ENCODE measurements at regions of chr16 and their contacts with region 1.

Region 1: GRCh38 chr16:30761928-30762810 is at the starts of genes CFAP119 and RNF40:
- DNase-seq: peak; percentile 96
- H3K4me3 ChIP-seq: peak within 1 kb of the TSS; percentile 79 to 91 (median 89)
- H3K27ac ChIP-seq: peak within 1 kb of the TSS; percentile 93 to 96 (median 94)
- H3K4me1 ChIP-seq: peaks cover 20 to 29% (median 25%) of the 10 kb centered on the region in 4 donors
- H3K27me3 ChIP-seq: no peaks in the 10 kb centered on the region
- CTCF ChIP-seq: no peak
- EP300 ChIP-seq: no peak
- POLR2A ChIP-seq: peak; percentile 86
- total RNA-seq, gene CFAP119: 3.3 to 15.5 (median 6.0) TPM
- total RNA-seq, gene RNF40: 55.3 to 105 (median 77.8) TPM

Region 2: DNA sequence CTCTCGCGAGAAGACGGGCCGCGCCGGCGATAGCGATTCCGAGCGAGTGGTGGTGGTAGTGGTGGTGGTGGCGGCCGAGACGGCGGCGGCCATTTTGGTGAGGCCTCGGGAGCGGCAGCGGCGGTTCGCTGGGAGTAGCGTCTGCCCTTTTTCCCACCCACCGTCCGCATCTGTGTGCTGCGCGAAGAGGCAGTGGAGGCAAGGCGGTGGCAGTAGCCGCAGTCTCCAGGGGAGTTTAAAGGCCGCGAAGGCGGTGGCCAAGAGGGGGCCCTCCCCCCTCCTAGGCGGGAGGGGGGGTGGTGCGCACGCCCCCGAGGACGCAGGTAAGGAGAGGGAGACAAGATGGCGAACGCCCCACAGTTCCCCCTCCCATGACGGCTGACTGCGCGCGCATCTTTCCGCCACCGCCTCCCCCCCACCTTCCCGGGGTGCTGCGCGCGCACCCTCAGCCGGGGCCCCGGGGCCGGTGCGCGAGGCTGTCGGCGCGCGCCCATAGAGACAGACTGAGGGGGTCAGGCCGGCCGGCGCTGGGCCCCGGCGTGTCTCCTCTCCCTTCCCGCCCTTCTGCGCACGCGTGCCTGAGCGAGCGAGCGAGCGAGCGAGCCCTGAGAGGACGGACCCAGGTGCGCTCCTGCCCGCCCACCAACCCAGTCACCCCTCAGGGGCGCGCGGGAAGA is 63.9 kb before region 1 on chr16:
- in situ Hi-C with region 1: no loop called
- intact Hi-C with region 1: loop called (anchors 10 kb)
- DNase-seq: peak; percentile 99
- H3K4me3 ChIP-seq: peak overlapping the region; percentile 79 to 96 (median 86)
- H3K27ac ChIP-seq: peak overlapping the region; percentile 98 to 100 (median 99)
- H3K4me1 ChIP-seq: peaks cover 9 to 24% (median 14%) of the 10 kb centered on the region in 4 donors
- H3K27me3 ChIP-seq: no peaks in the 10 kb centered on the region
- CTCF ChIP-seq: no peak
- EP300 ChIP-seq: no peak
- POLR2A ChIP-seq: peak; percentile 94

Region 3: DNA sequence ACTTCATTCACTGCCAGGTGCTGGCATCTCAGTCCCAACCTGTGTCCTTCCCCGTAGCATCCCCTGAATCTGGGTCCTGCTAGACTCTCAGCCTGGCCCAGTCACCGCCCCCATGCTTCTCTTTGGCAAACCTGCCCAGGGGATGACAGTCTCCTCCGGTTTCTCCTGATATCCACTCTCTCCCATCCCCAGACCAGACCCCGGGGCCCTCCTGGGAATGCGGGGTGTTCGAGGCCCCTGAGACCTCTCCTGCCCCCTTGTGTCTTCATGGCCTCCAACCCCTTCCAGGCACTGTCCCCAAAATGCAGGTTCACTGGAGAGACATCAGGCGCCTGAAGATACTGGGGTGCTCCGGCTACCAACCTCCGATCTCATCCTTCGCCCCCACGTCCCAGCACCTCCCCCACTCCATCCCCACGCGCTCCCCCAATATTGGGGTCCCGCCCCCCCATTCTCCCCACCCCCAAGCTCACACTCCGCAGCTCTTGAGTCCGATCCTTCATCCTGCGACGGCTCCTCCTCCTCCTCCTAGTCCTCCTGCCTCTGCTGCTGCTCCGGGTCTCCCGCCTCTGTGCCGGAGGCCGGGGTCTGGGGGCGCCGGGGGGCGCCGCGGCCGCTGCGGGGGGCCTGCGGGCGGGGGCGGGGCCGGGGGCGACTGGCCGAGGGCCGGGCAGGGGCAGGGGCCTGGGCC is 247.9 kb after region 1 on chr16:
- in situ Hi-C with region 1: no loop called
- intact Hi-C with region 1: no loop called
- DNase-seq: no peak
- H3K4me3 ChIP-seq: no peak overlapping the region
- H3K27ac ChIP-seq: no peak overlapping the region
- H3K4me1 ChIP-seq: peaks cover 0 to 4% (median 0%) of the 10 kb centered on the region in 4 donors
- H3K27me3 ChIP-seq: peaks cover 78% of the 10 kb centered on the region
- CTCF ChIP-seq: no peak
- EP300 ChIP-seq: no peak
- POLR2A ChIP-seq: no peak

Region 4: DNA sequence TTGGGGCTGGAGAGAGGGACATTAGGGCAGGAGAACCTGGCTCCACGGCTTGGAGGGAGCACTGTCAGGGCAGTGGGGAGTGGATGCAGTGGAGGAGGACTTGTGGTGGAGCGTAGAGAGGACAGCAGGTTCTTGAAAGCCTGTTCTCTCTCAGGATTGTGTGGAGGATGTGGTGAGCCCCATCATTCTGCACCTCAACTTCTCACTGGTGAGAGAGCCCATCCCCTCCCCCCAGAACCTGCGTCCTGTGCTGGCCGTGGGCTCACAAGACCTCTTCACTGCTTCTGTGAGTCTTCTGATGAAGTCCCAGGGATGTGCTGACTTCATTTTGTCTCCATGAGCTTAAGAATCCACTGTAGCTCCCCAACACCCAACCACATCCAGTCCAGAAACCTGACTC is 652.5 kb after region 1 on chr16:
- in situ Hi-C with region 1: no loop called
- intact Hi-C with region 1: loop called (anchors 5 kb)
- DNase-seq: peak; percentile 23
- H3K4me3 ChIP-seq: no peak overlapping the region
- H3K27ac ChIP-seq: no peak overlapping the region
- H3K4me1 ChIP-seq: no peaks in the 10 kb centered on the region
- H3K27me3 ChIP-seq: peaks cover 4% of the 10 kb centered on the region
- CTCF ChIP-seq: no peak
- EP300 ChIP-seq: no peak
- POLR2A ChIP-seq: no peak

Region 5: DNA sequence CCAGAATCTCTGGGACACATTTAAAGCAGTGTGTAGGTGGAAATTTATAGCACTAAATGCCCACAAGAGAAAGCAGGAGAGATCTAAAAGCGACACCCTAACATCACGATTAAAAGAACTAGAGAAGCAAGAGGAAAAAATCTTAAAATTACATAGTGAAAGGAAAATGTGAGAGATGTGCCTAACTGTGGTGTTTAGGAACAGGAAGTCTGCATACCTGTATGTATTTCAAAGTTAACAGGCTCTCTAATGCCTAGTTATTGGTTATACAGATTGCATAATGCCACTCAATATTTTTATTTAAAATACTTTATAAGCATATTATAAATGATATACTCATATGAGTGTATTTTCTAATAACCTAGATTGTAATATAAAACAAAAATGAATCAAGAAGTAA is 1137.3 kb after region 1 on chr16:
- in situ Hi-C with region 1: no loop called
- intact Hi-C with region 1: no loop called
- DNase-seq: no peak
- H3K4me3 ChIP-seq: no peak overlapping the region
- H3K27ac ChIP-seq: no peak overlapping the region
- H3K4me1 ChIP-seq: no peaks in the 10 kb centered on the region
- H3K27me3 ChIP-seq: no peaks in the 10 kb centered on the region
- CTCF ChIP-seq: no peak
- EP300 ChIP-seq: no peak
- POLR2A ChIP-seq: no peak

Measured in transverse colon (tissue), 4 donors.